WTC11 (cell line): ENCODE measurements at regions of chr11 and their contacts with region 1.

Region 1: DNA sequence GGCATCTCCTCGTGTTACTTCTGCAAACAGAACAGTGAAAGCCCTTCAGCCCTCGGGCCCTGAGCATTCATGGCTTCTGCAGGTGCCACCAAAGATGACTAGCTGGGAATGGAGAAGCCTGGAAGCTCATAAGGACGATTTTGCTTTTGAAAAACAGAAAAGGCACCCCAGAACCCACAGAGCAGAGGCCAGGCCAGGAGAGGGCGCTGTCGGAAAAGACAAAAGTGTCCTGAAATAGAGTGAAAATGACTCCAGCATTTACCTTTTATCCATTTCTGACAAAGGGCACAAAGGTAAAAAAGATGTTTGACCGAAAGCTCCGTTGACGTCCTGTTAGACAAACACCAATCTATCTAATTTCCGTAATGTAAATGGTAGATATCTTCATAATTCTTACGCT is 37.6 kb downstream of the ZNF195 start:
- DNase-seq: peak; percentile 81
- ATAC-seq: peak; percentile 70
- H3K4me3 Mint-ChIP-seq: no peak overlapping the region
- H3K27ac Mint-ChIP-seq: no peak overlapping the region
- H3K4me1 Mint-ChIP-seq: peaks cover 18% of the 10 kb centered on the region
- H3K27me3 Mint-ChIP-seq: peaks cover 21% of the 10 kb centered on the region
- CTCF ChIP-seq: peak; percentile 82

Region 2: DNA sequence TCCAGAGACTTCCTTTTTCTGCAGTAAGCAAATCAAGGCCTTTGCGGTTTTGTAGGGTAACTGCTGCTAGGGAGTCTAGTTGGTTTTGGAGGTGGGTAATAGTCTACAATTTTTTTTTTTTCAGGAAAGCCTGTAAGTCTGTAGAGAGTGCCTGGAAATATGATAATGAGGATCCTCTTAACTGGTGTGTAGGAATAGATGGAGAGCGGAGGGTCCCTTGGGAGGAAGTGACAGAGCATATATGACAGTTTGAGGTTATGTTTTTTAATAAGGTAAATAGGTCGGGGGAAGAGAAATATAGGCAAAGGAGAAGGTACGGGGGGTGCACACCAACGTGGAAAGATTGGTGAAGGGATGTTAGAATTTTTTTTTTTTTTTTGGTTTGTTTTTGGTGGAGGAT is 11.8 kb after region 1 on chr11:
- CTCF ChIA-PET with region 1: interaction called, 25 read pairs
- POLR2A ChIA-PET with region 1: no interaction called
- DNase-seq: no peak
- ATAC-seq: no peak
- H3K4me3 Mint-ChIP-seq: no peak overlapping the region
- H3K27ac Mint-ChIP-seq: no peak overlapping the region
- H3K4me1 Mint-ChIP-seq: no peaks in the 10 kb centered on the region
- H3K27me3 Mint-ChIP-seq: peaks cover 12% of the 10 kb centered on the region
- CTCF ChIP-seq: no peak

Region 3: GRCh38 chr11:3378426-3379423 is 37.4 kb after region 1 on chr11 and contains the start of gene ZNF195:
- CTCF ChIA-PET with region 1: interaction called, 42 read pairs
- POLR2A ChIA-PET with region 1: no interaction called
- DNase-seq: peak; percentile 100
- ATAC-seq: peak; percentile 95
- H3K4me3 Mint-ChIP-seq: peak within 1 kb of the TSS; percentile 96
- H3K27ac Mint-ChIP-seq: peak within 1 kb of the TSS; percentile 92
- H3K4me1 Mint-ChIP-seq: peaks cover 73% of the 10 kb centered on the region
- H3K27me3 Mint-ChIP-seq: no peaks in the 10 kb centered on the region; the same call in 1 of the 2 replicates
- CTCF ChIP-seq: no peak
- total RNA-seq, gene ZNF195: 72.7 to 85.5 TPM (median 74.2 TPM) in 3 replicates

Region 4: GRCh38 chr11:3412837-3413236 is 71.5 kb after region 1 on chr11:
- CTCF ChIA-PET with region 1: interaction called, 67 read pairs
- POLR2A ChIA-PET with region 1: no interaction called
- DNase-seq: no peak
- ATAC-seq: no peak
- H3K4me3 Mint-ChIP-seq: no peak overlapping the region
- H3K27ac Mint-ChIP-seq: no peak overlapping the region
- H3K4me1 Mint-ChIP-seq: peaks cover 10% of the 10 kb centered on the region
- H3K27me3 Mint-ChIP-seq: no peaks in the 10 kb centered on the region
- CTCF ChIP-seq: no peak

Region 5: DNA sequence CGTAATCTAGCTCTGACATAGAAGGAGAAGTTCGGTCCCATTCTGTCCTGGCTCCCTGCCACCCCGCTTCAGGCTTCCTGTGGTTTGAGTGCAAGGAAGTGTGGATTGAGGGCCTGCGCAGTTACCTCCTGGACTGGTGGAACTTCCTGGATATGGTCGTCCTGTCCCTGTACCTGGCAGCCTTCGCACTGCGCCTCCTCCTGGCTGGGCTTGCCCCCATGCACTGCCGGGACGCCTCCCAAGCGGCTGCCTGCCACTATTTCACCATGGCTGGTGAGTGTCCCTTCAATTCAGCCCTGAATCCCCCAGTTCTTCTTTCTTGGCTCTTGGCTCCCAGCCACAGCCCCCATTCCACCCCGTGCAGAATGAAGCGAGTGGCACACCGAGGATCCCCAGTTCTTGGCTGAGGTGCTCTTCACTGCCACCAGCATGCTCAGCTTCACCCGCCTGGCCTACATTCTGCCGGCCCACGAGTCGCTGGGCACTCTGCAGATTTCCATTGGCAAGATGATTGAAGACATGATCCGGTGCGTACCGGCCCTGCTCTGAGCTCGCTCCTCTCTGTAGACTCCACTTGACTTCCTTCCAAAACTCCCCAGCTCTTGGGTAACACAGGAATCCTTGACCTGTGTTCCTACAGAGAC is 285.1 kb after region 1 on chr11:
- CTCF ChIA-PET with region 1: no interaction called
- POLR2A ChIA-PET with region 1: no interaction called
- DNase-seq: peak; percentile 26
- ATAC-seq: peak; percentile 94
- H3K4me3 Mint-ChIP-seq: no peak overlapping the region
- H3K27ac Mint-ChIP-seq: no peak overlapping the region
- H3K4me1 Mint-ChIP-seq: no peaks in the 10 kb centered on the region
- H3K27me3 Mint-ChIP-seq: no peaks in the 10 kb centered on the region
- CTCF ChIP-seq: no peak

Region 6: GRCh38 chr11:3685923-3686322 is 344.6 kb after region 1 on chr11:
- CTCF ChIA-PET with region 1: no interaction called
- POLR2A ChIA-PET with region 1: no interaction called
- DNase-seq: no peak
- ATAC-seq: no peak
- H3K4me3 Mint-ChIP-seq: no peak overlapping the region
- H3K27ac Mint-ChIP-seq: no peak overlapping the region
- H3K4me1 Mint-ChIP-seq: no peaks in the 10 kb centered on the region
- H3K27me3 Mint-ChIP-seq: no peaks in the 10 kb centered on the region
- CTCF ChIP-seq: no peak